Aorta (tissue), 5 donors: ENCODE measurements at regions of chr6 and their contacts with region 1.

Region 1: GRCh38 chr6:160520043-160520904 is 143.8 kb downstream of the LPA start:
- DNase-seq: peak; percentile 86 to 94
- ATAC-seq: peak; percentile 97
- H3K4me3 ChIP-seq: peak overlapping the region; percentile 68 to 88
- H3K27ac ChIP-seq: peak overlapping the region in 1 of 2 donors; percentile 86
- H3K4me1 ChIP-seq: peaks cover 0 to 1% of the 10 kb centered on the region in 2 donors
- H3K27me3 ChIP-seq: no peaks in the 10 kb centered on the region

Region 2: DNA sequence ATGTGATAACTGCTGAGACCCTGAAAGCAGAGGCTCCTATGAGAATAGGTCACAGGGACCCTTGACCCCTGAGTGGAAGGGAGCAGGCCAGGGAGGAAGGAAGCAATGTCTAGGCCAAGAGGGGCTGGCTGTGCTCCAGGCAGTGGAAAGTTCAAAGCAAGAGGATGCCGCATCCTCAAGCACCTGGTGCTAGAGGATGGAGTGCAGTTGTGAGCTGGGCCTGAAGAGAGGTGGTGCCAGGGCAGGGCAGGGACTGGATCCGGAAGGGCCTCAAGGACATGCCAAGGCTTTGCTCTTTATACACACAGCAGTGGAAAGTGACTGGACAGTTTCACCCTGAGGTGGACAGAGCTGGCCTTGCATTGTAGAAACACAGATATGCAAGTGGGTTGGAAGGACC is 75.1 kb before region 1 on chr6:
- intact Hi-C with region 1: no loop called
- DNase-seq: no peak
- ATAC-seq: no peak
- H3K4me3 ChIP-seq: no peak overlapping the region
- H3K27ac ChIP-seq: peak overlapping the region in 1 of 2 donors; percentile 10
- H3K4me1 ChIP-seq: no peaks in the 10 kb centered on the region
- H3K27me3 ChIP-seq: no peaks in the 10 kb centered on the region

Region 3: DNA sequence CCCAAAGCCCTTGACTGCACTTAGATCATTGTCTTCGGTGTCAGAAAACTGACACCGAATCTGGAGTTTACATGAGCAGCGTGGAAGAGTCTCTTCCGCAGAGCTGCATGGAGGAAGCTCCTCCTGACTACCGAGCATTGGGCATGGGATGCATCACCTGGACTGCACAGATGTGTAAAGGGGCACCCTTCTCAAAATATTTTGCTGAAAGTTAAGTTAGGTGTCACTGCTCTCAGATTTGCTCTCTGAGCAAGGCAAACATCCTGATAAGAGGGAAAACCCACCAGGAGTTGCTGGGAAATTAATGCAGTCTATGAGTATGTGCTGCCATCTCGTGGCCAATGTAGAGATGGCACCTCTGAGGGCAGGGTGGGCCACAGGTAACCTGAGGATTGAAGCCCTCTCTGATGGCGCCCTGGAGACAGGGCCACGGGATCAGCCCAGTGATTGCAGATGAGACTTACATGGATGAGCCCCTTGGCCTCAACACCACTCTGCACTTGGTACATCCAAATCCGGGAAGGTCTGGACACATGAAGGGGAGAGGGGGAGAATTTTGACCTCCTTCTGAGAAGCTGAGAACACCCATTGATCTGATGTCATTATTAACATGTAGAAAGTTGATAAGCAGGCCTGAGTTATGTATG is 13.9 kb after region 1 on chr6:
- intact Hi-C with region 1: loop called in 1 of 2 experiments (anchors 1 kb)
- DNase-seq: peak; percentile 52 to 81
- ATAC-seq: peak; percentile 86
- H3K4me3 ChIP-seq: no peak overlapping the region
- H3K27ac ChIP-seq: no peak overlapping the region
- H3K4me1 ChIP-seq: no peaks in the 10 kb centered on the region
- H3K27me3 ChIP-seq: peaks cover 0 to 2% of the 10 kb centered on the region in 2 donors

Region 4: GRCh38 chr6:160766989-160767660 is 246.9 kb after region 1 on chr6:
- intact Hi-C with region 1: loop called in 1 of 2 experiments (anchors 10 kb)
- DNase-seq: peak; percentile 68 to 84
- ATAC-seq: peak; percentile 65
- H3K4me3 ChIP-seq: peak overlapping the region; percentile 38 to 39
- H3K27ac ChIP-seq: no peak overlapping the region
- H3K4me1 ChIP-seq: no peaks in the 10 kb centered on the region
- H3K27me3 ChIP-seq: no peaks in the 10 kb centered on the region